CD8-positive, alpha-beta T cell (primary cell): ENCODE measurements at regions of chr2 and their contacts with region 1.

Region 1: GRCh38 chr2:43995733-43996533 is at the start of gene LRPPRC:
- DNase-seq: peak; percentile 77 to 96 (median 90)
- ATAC-seq: peak; percentile 96
- H3K4me3 ChIP-seq: peak within 1 kb of the TSS; percentile 78 to 94
- H3K4me3 Mint-ChIP-seq: peak within 1 kb of the TSS; percentile 91
- H3K27ac ChIP-seq: peak within 1 kb of the TSS; percentile 65 to 91
- H3K27ac Mint-ChIP-seq: peak within 1 kb of the TSS; percentile 96
- H3K4me1 ChIP-seq: peaks cover 36% of the 10 kb centered on the region
- H3K4me1 Mint-ChIP-seq: peaks cover 51% of the 10 kb centered on the region
- H3K27me3 ChIP-seq: no peaks in the 10 kb centered on the region
- H3K27me3 Mint-ChIP-seq: peaks cover 2% of the 10 kb centered on the region
- CTCF ChIP-seq: no peak
- total RNA-seq, gene LRPPRC: 62.8 to 67.2 TPM

Region 2: GRCh38 chr2:42494355-42495233 is 1501.3 kb before region 1 on chr2:
- CTCF ChIA-PET with region 1: no interaction called
- POLR2A ChIA-PET with region 1: no interaction called
- intact Hi-C with region 1: loop called in 1 of 2 experiments (anchors 10 kb)
- DNase-seq: peak; percentile 51 to 84 (median 75)
- ATAC-seq: peak; percentile 43
- H3K4me3 ChIP-seq: peak overlapping the region; percentile 58 to 74
- H3K4me3 Mint-ChIP-seq: peak overlapping the region; percentile 93
- H3K27ac ChIP-seq: peak overlapping the region in 1 of 2 experiments; percentile 15
- H3K27ac Mint-ChIP-seq: peak overlapping the region; percentile 89
- H3K4me1 ChIP-seq: no peaks in the 10 kb centered on the region
- H3K4me1 Mint-ChIP-seq: peaks cover 32% of the 10 kb centered on the region
- H3K27me3 ChIP-seq: peaks cover 0 to 4% of the 10 kb centered on the region in 2 experiments
- H3K27me3 Mint-ChIP-seq: peaks cover 9% of the 10 kb centered on the region
- CTCF ChIP-seq: peak; percentile 92

Region 3: DNA sequence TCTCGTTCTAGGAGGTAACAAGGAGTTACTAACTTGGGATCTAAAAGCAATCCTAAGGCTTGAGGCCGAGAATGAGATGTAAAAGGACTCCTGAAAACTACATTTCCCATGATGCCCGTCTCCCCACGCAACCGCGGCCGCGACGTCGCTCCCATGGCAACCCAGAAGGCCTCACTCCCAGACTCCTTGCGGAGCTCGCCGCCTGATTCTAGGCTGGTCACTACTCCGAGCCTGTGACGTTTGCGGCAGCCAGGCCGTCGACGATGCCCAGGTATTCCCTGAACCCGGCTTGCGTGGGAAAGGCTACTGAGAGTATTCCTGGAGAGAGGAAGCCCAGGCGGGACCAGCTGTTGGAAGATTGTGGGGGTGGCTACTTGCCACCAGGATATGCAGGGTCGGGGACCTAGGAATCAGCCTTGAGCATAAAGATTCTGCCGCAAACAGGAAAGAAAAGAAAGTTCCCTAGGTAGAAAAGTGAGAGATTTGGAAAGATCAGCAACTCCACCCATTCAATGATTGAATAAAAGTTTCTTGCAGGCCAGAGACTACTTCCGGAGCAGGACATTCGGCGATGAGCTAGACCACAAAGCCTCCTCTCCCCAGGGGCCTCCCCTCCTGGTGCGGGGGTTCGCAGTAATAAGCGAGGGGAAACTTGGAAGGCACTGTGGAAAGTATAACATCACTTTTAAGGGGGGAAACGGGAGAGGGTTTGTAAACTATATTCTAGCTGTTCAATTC is 221.9 kb before region 1 on chr2 and contains the start of gene DYNC2LI1:
- CTCF ChIA-PET with region 1: no interaction called
- POLR2A ChIA-PET with region 1: no interaction called
- intact Hi-C with region 1: loop called (anchors 2 to 5 kb)
- DNase-seq: peak; percentile 38 to 86 (median 70)
- ATAC-seq: peak; percentile 92
- H3K4me3 ChIP-seq: peak within 1 kb of the TSS; percentile 89 to 97
- H3K4me3 Mint-ChIP-seq: peak within 1 kb of the TSS; percentile 96
- H3K27ac ChIP-seq: peak within 1 kb of the TSS; percentile 48 to 54
- H3K27ac Mint-ChIP-seq: peak within 1 kb of the TSS; percentile 80
- H3K4me1 ChIP-seq: no peaks in the 10 kb centered on the region
- H3K4me1 Mint-ChIP-seq: peaks cover 15% of the 10 kb centered on the region
- H3K27me3 ChIP-seq: no peaks in the 10 kb centered on the region
- H3K27me3 Mint-ChIP-seq: peaks cover 8% of the 10 kb centered on the region
- CTCF ChIP-seq: no peak
- total RNA-seq, gene DYNC2LI1: 1.4 to 1.8 TPM

Region 4: GRCh38 chr2:44237221-44237620 is 241.3 kb after region 1 on chr2:
- CTCF ChIA-PET with region 1: no interaction called
- POLR2A ChIA-PET with region 1: no interaction called
- intact Hi-C with region 1: loop called in 1 of 2 experiments (anchors 5 kb)
- DNase-seq: peak in 8 of 9 experiments; percentile 17 to 76 (median 30)
- ATAC-seq: peak; percentile 84
- H3K4me3 ChIP-seq: peak overlapping the region; percentile 17 to 30
- H3K4me3 Mint-ChIP-seq: peak overlapping the region; percentile 71
- H3K27ac ChIP-seq: peak overlapping the region; percentile 7 to 64
- H3K27ac Mint-ChIP-seq: peak overlapping the region; percentile 53
- H3K4me1 ChIP-seq: peaks cover 31% of the 10 kb centered on the region
- H3K4me1 Mint-ChIP-seq: peaks cover 34% of the 10 kb centered on the region
- H3K27me3 ChIP-seq: no peaks in the 10 kb centered on the region
- H3K27me3 Mint-ChIP-seq: no peaks in the 10 kb centered on the region
- CTCF ChIP-seq: no peak

Region 5: GRCh38 chr2:44420725-44421124 is 424.8 kb after region 1 on chr2:
- CTCF ChIA-PET with region 1: no interaction called
- POLR2A ChIA-PET with region 1: no interaction called
- intact Hi-C with region 1: no loop called
- DNase-seq: no peak
- ATAC-seq: no peak
- H3K4me3 ChIP-seq: no peak overlapping the region
- H3K4me3 Mint-ChIP-seq: no peak overlapping the region
- H3K27ac ChIP-seq: no peak overlapping the region
- H3K27ac Mint-ChIP-seq: no peak overlapping the region
- H3K4me1 ChIP-seq: no peaks in the 10 kb centered on the region
- H3K4me1 Mint-ChIP-seq: peaks cover 4% of the 10 kb centered on the region
- H3K27me3 ChIP-seq: no peaks in the 10 kb centered on the region
- H3K27me3 Mint-ChIP-seq: no peaks in the 10 kb centered on the region
- CTCF ChIP-seq: no peak

Region 6: DNA sequence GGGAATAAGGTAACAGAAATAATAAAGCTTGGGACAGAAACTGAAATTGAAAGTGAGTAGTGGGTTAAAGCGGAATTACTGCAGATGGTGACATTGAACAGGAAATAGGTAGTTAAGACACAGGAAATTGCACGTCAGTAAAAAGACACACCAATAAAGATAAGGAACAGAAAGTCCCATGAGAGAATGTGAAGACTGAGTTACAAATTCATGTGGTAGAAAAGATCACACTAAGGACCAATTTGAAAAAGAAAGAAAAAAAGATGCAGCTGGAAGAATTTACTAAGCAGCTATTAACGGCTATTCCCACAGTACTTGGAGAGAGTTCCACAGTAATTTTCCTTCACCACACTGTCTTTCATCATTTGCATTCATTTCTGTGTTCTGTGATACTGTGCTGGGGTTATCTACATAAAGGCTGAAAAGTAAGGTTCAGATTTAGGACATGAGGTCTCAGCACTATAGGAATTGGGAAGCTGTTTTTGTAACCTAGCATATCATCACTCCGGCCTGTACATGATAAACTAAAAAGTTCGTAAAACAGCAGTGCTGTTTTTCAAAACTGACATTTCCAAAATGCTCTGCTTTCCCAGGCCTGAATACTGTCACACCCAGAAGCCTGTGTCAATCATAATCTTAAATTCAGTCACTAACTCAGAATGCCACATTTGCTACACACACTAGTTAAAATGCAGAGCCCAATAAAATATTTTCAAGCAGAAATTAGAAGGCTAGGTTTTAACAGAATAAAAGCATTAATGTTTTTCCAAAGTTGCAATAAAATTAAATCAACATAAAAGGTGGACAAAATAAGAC is 1572.2 kb after region 1 on chr2:
- CTCF ChIA-PET with region 1: no interaction called
- POLR2A ChIA-PET with region 1: no interaction called
- intact Hi-C with region 1: loop called in 1 of 2 experiments (anchors 5 kb)
- DNase-seq: peak in 2 of 9 experiments; percentile 82 to 93
- ATAC-seq: peak; percentile 97
- H3K4me3 ChIP-seq: peak overlapping the region; percentile 53 to 55
- H3K4me3 Mint-ChIP-seq: peak overlapping the region; percentile 89
- H3K27ac ChIP-seq: peak overlapping the region; percentile 51 to 93
- H3K27ac Mint-ChIP-seq: peak overlapping the region; percentile 88
- H3K4me1 ChIP-seq: peaks cover 15% of the 10 kb centered on the region
- H3K4me1 Mint-ChIP-seq: peaks cover 27% of the 10 kb centered on the region
- H3K27me3 ChIP-seq: no peaks in the 10 kb centered on the region
- H3K27me3 Mint-ChIP-seq: no peaks in the 10 kb centered on the region
- CTCF ChIP-seq: no peak